Endothelial cell of umbilical vein (primary cell): ENCODE measurements at regions of chr12 and their contacts with region 1.

Region 1: GRCh38 chr12:57261428-57261865 is 10.5 kb upstream of the STAC3 start:
- DNase-seq: no peak
- H3K4me3 ChIP-seq: no peak overlapping the region
- H3K27ac ChIP-seq: no peak overlapping the region
- H3K4me1 ChIP-seq: no peaks in the 10 kb centered on the region
- H3K27me3 ChIP-seq: no peaks in the 10 kb centered on the region
- CTCF ChIP-seq: no peak
- POLR2A ChIP-seq: no peak

Region 2: DNA sequence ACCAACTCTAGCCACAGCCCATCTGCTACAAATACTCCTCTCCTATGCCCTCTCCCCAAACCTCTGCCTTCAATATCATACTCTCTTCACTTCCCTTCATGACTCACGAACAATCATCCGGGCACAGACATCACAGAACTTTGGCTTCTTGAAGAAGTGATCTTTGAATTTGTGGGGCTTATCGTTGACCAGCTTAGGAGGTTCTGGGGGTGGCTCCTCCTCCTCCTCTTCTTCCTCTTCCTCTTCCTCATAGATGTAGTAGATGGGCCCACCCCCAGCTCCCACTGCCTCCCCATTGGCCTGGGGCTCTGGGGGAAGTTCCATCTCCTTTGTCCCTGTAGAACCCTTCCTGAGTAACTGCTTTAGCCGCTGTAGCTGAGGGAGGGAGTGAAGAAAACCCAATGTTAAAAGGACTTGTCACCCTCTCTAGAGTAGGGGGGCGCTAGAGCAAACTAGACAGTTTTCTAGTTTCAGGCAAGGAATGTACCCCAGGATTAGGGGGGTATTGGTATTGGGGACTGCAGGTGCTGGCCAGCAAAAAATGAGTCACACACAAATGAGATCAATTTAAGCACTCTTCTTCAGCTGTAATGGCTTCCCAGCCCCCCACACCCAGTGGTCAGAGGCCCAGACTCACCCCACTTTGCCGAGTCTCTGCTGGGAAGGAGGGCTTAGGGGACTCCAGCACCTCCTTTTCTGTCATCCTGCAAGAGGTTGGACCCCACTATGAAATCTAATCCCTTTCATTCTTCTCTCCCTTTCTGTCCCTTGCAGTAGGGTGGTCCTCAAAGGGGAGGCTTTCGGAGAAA is 12.3 kb before region 1 on chr12:
- CTCF ChIA-PET with region 1: no interaction called
- POLR2A ChIA-PET with region 1: no interaction called
- dilution Hi-C with region 1: no loop called
- intact Hi-C with region 1: no loop called
- DNase-seq: no peak
- H3K4me3 ChIP-seq: no peak overlapping the region
- H3K27ac ChIP-seq: no peak overlapping the region
- H3K4me1 ChIP-seq: no peaks in the 10 kb centered on the region
- H3K27me3 ChIP-seq: peaks cover 0 to 3% of the 10 kb centered on the region in 2 experiments
- CTCF ChIP-seq: no peak
- POLR2A ChIP-seq: no peak

Region 3: DNA sequence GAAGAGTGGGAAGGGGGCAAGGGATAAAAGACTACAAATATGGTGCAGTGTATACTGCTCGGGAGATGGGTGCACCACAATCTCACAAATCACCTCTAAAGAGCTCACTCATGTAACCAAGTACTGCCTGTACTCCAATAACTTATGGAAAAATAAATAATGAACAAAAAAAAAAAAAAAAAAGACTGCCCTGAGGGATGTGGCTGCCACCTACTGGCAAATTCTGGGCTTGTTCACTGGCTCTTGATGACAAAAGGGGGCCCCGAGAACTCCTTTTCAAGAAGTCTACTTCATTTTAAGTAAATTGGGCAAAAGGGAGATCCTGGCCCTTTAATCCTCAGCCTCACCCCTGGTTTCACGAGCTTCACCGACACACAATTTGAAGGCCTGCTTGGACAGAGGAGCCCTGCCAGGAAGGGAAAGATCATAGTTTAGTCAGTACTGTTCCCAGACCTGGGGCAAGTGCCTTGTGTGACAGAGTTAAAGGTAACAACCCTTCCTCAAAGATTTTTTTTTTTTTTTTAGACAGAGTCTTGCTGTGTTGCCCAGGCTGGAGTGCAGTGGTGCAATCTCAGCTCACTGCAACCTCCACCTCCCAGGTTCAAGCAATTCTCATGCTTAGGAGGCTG is 15.6 kb after region 1 on chr12:
- CTCF ChIA-PET with region 1: interaction called, 7 read pairs
- POLR2A ChIA-PET with region 1: no interaction called
- dilution Hi-C with region 1: no loop called
- intact Hi-C with region 1: loop called (anchors 1 kb)
- DNase-seq: peak; percentile 49
- H3K4me3 ChIP-seq: no peak overlapping the region
- H3K27ac ChIP-seq: no peak overlapping the region
- H3K4me1 ChIP-seq: peaks cover 18% of the 10 kb centered on the region
- H3K27me3 ChIP-seq: no peaks in the 10 kb centered on the region
- CTCF ChIP-seq: peak; percentile 41 to 48
- POLR2A ChIP-seq: no peak